Naive thymus-derived CD8-positive, alpha-beta T cell (primary cell): ENCODE measurements at regions of chr20 and their contacts with region 1.

Region 1: DNA sequence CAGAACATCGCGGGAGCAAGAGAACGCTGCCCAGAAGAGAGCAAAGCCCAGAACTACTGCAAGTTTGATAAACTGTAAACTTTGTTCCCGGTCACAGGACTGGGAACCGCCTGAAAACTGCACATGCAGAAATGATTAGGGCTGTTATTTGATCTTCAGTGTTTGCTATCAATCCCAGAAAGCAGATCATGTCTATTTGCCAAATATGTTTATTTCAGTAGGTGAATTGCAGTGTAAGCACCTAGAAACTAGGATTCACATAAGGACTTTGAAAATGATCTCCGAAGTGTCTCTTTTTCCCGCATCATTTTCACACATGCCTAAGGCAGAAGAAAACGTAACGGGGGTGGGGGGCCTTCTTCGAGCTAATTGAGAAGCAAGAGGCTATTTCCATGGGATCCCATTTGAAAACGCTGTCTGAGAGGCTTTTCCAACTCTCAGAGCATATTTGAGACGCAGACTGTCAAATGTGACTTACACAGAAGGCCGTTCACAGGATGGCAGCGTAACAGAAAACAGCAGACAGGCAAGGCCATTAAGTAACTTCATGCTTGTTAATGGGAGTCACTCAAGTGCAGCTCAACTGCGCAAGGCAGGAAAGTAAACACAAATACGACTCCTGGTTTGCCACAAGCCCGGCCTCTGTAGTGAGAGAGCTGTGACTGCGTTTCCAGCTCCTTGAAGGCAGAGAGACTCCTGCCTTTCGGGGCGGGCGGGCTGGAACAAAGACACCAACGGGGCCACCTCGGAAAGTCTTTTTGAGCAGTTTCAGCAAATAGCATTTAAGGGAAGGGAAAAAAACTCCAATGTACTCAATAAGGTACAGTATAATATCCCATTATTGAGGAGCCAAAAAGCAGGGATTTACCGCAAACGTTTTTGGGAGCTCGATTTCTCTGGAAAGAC is 144.7 kb upstream of the ZNF217 start:
- DNase-seq: no peak
- ATAC-seq: no peak
- H3K4me3 Mint-ChIP-seq: no peak overlapping the region
- H3K27ac Mint-ChIP-seq: peak overlapping the region in 5 of 10 donors; percentile 28 to 93 (median 89)
- H3K4me1 Mint-ChIP-seq: peaks cover 25 to 59% (median 49%) of the 10 kb centered on the region in 4 donors
- H3K27me3 Mint-ChIP-seq: no peaks in the 10 kb centered on the region

Region 2: DNA sequence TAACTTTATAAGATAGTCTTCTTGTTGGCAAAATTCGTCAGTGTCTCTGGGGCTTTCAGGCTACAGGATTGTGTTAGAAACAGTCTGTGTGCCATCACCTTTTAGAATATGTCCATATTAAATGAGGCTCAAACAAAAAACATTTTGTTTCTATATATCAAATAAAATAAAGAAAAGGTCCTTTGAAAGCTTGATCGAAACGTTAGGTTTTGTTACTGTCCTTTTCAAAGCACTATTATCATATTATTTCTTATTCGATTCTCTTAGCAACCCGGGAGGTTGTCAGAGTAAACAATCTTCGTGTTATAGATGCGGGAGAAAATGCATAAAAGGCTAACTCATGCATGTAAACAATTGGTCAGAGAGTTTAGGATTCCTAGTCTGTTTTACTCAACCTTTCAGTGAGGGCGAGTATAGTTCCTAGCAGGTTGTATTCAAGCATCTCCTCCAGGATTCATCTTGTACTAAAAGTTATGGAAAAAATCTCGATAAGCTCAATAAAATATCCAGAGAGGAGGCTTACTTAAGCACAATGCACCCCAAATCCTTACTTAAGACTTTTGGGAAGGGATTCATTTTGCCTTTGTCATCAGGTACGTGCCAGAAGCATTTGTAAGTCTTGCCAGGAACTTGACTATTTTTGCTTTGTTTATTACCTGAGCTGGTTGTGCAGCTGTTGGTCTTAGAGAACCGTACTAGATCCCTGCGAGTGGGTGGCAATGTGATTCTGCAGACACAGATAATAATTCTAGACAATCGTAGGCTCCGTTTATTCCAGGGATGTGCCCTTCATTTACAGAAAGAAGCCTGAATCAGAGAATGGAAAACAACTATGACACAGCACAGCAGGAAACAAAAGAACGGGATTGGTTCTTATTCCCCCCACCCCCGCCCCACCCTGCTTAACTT is 14.9 kb after region 1 on chr20:
- POLR2A ChIA-PET with region 1: interaction called, 12 read pairs
- DNase-seq: no peak
- ATAC-seq: no peak
- H3K4me3 Mint-ChIP-seq: peak overlapping the region in 5 of 10 donors; percentile 34 to 71 (median 36)
- H3K27ac Mint-ChIP-seq: peak overlapping the region; percentile 91 to 98 (median 94)
- H3K4me1 Mint-ChIP-seq: peaks cover 31 to 78% (median 76%) of the 10 kb centered on the region in 4 donors
- H3K27me3 Mint-ChIP-seq: no peaks in the 10 kb centered on the region

Region 3: GRCh38 chr20:53809183-53809582 is 70.9 kb after region 1 on chr20:
- POLR2A ChIA-PET with region 1: no interaction called
- DNase-seq: no peak
- ATAC-seq: no peak
- H3K4me3 Mint-ChIP-seq: no peak overlapping the region
- H3K27ac Mint-ChIP-seq: peak overlapping the region in 2 of 10 donors; percentile 1 to 58
- H3K4me1 Mint-ChIP-seq: peaks cover 7 to 24% (median 11%) of the 10 kb centered on the region in 4 donors
- H3K27me3 Mint-ChIP-seq: no peaks in the 10 kb centered on the region